Breast epithelium (tissue), 4 donors: ENCODE measurements at regions of chr12 and their contacts with region 1.

Region 1: GRCh38 chr12:2640705-2641104 is 154.1 kb upstream of the FKBP4 start:
- DNase-seq: peak in 1 of 2 donors; percentile 48
- H3K4me3 ChIP-seq: no peak overlapping the region
- H3K27ac ChIP-seq: peak overlapping the region; percentile 4 to 82
- H3K4me1 ChIP-seq: no peaks in the 10 kb centered on the region
- H3K27me3 ChIP-seq: no peaks in the 10 kb centered on the region
- CTCF ChIP-seq: no peak
- POLR2A ChIP-seq: no peak

Region 2: DNA sequence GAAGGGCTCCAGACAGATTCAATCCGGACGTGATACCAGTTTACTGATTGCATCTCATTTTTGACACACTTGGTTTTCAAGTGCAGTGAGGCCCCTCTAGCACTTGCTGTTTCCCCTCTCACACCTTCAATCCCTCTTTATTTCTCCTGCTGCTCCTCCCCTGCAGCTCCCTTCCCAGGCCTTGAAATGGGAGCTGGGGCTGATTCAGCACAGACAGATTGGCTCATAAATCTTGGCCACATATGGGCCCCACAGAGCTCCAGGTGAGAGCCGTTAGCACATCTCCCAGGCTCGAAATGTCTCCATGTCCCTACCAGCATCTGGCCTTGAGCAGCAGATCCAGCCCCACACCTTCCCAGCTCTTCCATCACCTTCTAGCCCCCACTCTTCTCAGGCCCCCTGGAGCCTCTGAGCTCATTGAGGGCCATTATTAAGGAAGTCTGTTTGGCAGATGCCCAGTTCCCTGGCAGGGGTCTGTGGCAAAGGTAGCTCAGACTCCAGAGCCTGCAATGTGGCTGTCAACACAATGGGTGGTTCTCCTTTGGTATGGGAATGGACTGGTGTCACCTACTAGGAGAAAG is 66.3 kb before region 1 on chr12:
- intact Hi-C with region 1: loop called (anchors 2 kb)
- DNase-seq: no peak
- H3K4me3 ChIP-seq: no peak overlapping the region
- H3K27ac ChIP-seq: no peak overlapping the region
- H3K4me1 ChIP-seq: no peaks in the 10 kb centered on the region
- H3K27me3 ChIP-seq: no peaks in the 10 kb centered on the region
- CTCF ChIP-seq: no peak
- POLR2A ChIP-seq: no peak